ENCODE measurements at regions of chr11 and their contacts with region 1.

Region 1: GRCh38 chr11:131246663-131247062 is 123.8 kb upstream of the NTM start:
- H3K4me3 ChIP-seq: no peak overlapping the region
- H3K27ac ChIP-seq: no peak overlapping the region
- H3K4me1 ChIP-seq: no peaks in the 10 kb centered on the region
- CTCF ChIP-seq: no peak

Region 2: GRCh38 chr11:131511794-131512193 is 265.1 kb after region 1 on chr11:
- CTCF ChIA-PET with region 1: interaction called, 14 read pairs
- POLR2A ChIA-PET with region 1: no interaction called
- H3K4me3 ChIP-seq: no peak overlapping the region
- H3K27ac ChIP-seq: no peak overlapping the region
- H3K4me1 ChIP-seq: no peaks in the 10 kb centered on the region
- CTCF ChIP-seq: no peak

Measured in HEK293 (cell line).